ENCODE measurements at regions of chr10 and their contacts with region 1.

Region 1: DNA sequence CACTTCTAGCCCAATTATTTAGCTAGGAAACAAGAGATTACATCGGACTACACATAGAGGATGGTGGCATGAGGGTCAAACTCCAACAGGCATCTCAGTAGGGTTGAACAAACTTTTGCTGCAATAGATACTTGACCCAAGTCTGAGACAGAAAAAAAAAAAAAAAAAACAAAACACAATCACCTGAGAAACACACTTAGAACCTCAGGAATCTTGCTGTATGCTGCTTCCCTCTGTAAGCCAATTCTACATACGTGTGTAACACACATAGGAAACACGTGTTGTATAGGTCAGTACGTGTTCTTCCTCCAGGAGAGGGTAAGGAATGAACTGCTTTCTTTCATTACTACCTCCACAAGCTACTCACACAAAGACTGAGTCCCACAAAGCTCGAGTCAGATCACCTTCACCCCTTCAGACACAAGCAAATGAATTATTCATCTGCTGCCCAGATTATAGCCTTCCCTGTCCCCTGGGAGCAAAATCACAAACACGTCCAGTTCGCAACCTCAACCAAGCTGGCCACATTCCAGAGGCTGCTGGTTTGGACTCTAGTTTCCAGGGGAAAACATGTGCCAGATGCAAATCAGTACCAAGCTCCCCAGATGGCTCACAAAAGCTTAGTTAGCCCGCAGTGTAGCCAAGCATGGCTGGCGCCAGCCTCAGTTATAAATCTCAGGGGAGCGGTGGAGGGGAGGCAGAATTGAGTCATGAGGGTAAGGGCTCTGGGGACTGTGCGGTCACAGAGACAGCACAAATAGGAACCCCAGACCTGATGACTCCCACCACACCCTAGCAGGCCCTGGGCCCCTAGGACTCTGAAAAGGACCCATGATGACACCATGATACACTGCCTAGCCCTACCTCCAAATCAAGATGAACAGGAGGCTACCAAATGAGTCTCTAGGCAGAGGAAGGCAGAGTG is 15.1 kb downstream of the PSAP start:
- DNase-seq: no peak
- H3K4me3 Mint-ChIP-seq: no peak overlapping the region
- H3K27ac Mint-ChIP-seq: no peak overlapping the region
- H3K4me1 Mint-ChIP-seq: peaks cover 47% of the 10 kb centered on the region
- H3K27me3 Mint-ChIP-seq: no peaks in the 10 kb centered on the region

Region 2: DNA sequence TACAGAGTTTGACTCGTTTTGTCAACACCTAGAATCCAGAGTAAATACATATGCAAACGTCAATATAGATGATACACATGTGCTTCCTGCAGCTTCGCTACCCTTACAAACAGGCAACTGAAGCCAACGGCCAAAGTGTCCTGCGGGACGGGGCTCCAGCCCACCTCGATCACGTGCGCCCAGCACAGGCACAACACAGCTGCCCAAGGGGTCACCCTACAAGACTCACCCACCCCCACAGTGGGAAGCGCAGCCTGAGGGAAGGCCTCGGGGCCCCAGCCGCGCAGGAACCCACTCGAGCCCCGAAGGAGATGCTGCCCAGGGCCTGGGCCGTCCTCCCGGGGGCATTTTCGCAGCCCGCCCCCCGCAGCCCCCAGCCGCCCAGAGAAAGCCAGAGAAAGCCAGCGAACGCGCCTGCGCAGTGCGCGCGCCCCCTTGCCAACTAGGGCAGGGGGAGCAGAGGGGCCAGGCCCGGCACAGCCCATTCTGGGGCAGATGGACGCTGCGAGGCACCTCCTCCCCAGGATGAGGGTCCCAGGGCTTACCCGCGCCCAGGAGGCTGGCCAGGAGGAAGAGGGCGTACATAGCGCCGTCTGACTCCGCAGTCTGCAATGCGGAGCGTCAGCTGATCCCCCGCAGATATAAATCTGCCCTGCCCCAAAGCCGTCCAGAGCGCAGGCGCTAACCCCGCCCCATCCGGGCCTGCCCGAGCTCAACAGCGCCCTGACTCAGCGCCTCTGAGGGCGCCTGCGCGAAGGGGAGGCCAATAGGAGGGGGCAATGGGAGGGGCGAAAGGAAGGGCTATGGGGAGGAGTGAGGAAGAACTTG is 14.9 kb after region 1 on chr10 and contains the start of gene PSAP:
- CTCF ChIA-PET with region 1: interaction called, 22 read pairs
- intact Hi-C with region 1: no loop called
- DNase-seq: peak; percentile 99
- H3K4me3 Mint-ChIP-seq: peak within 1 kb of the TSS; percentile 91
- H3K27ac Mint-ChIP-seq: peak within 1 kb of the TSS; percentile 65
- H3K4me1 Mint-ChIP-seq: peaks cover 42% of the 10 kb centered on the region
- H3K27me3 Mint-ChIP-seq: no peaks in the 10 kb centered on the region
- total RNA-seq, gene PSAP: 129 to 133 TPM

Region 3: GRCh38 chr10:71888623-71889387 is 52.9 kb after region 1 on chr10:
- CTCF ChIA-PET with region 1: interaction called, 3 read pairs
- intact Hi-C with region 1: loop called (anchors 2 kb)
- DNase-seq: peak; percentile 80
- H3K4me3 Mint-ChIP-seq: peak overlapping the region; percentile 78
- H3K27ac Mint-ChIP-seq: peak overlapping the region; percentile 24
- H3K4me1 Mint-ChIP-seq: peaks cover 13% of the 10 kb centered on the region
- H3K27me3 Mint-ChIP-seq: no peaks in the 10 kb centered on the region

Measured in activated naive CD4-positive, alpha-beta T cell treated with anti-CD3 and anti-CD28 coated beads for 36 hours (primary cell).